ENCODE measurements at regions of chr3 and their contacts with region 1.

Region 1: DNA sequence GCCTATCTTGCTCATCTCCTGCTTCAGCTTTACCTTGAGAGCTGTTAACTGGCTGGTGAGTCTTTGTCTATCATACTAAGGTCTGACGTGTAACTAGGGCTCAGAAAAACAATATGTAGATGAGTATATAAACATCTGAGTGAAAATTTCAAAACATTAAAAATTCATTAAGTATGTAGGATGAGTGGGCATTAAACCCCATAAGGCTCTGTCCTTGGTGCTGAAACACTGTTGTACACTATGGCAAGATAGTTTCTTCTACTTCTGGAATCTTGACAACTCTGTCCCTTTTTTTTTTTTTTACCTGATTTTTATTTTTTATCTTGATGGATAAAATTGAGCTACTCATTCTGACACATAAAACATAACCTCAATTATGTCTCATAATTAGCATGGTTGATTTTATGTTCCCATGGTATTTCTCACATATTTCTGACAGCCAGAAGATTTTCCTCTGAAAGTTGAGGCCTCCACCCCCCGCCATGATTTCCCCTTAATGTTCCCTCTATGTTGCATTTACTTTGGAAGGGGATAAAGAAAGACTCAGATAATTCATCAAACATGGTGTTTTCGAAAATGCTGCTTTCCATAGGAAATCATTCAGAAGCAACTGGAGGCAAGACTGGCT is 54.3 kb downstream of the DGKG start:
- DNase-seq: peak; percentile 52
- ATAC-seq: no peak
- H3K4me3 ChIP-seq: no peak overlapping the region
- H3K27ac ChIP-seq: no peak overlapping the region
- H3K4me1 ChIP-seq: no peaks in the 10 kb centered on the region
- H3K27me3 ChIP-seq: peaks cover 17% of the 10 kb centered on the region
- CTCF ChIP-seq: no peak
- POLR2A ChIP-seq: no peak
- RAD21 ChIP-seq: no peak

Region 2: GRCh38 chr3:186322761-186323160 is 15.1 kb after region 1 on chr3:
- CTCF ChIA-PET with region 1: interaction called, 10 read pairs
- POLR2A ChIA-PET with region 1: no interaction called
- dilution Hi-C with region 1: no loop called
- in situ Hi-C with region 1: no loop called
- intact Hi-C with region 1: no loop called
- DNase-seq: no peak
- ATAC-seq: no peak
- H3K4me3 ChIP-seq: no peak overlapping the region
- H3K27ac ChIP-seq: no peak overlapping the region
- H3K4me1 ChIP-seq: no peaks in the 10 kb centered on the region
- H3K27me3 ChIP-seq: peaks cover 3% of the 10 kb centered on the region
- CTCF ChIP-seq: no peak
- POLR2A ChIP-seq: no peak
- RAD21 ChIP-seq: no peak

Region 3: GRCh38 chr3:186653080-186653707 is 345.5 kb after region 1 on chr3:
- CTCF ChIA-PET with region 1: no interaction called
- POLR2A ChIA-PET with region 1: no interaction called
- dilution Hi-C with region 1: no loop called
- in situ Hi-C with region 1: no loop called
- intact Hi-C with region 1: no loop called
- DNase-seq: no peak
- ATAC-seq: no peak
- H3K4me3 ChIP-seq: no peak overlapping the region
- H3K27ac ChIP-seq: no peak overlapping the region
- H3K4me1 ChIP-seq: no peaks in the 10 kb centered on the region
- H3K27me3 ChIP-seq: peaks cover 5% of the 10 kb centered on the region
- CTCF ChIP-seq: no peak
- POLR2A ChIP-seq: no peak
- RAD21 ChIP-seq: no peak

Measured in IMR-90 (cell line).